ENCODE measurements at regions of chrX and their contacts with region 1.

Region 1: DNA sequence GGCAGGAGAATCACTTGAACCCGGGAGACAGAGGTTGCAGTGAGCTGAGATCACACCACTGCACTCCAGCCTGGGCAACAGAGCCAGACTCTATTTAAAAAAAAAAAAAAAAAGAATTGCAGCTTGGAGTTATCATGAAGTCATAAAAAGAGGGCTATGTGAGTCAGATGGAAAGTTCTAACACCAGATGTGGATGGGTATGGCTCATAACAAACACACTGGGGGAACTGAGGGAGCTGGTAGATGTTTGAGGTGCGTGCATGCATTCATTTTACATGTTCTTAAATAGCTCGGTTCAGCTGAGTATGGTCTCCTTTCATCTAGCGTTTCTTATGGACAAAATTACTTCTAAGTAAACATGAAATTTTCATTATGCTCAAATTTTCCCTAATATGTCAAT is 11.7 kb downstream of the TRMT2B start:
- DNase-seq: no peak
- ATAC-seq: no peak
- H3K4me3 ChIP-seq: no peak overlapping the region
- H3K4me3 Mint-ChIP-seq: no peak overlapping the region
- H3K27ac ChIP-seq: no peak overlapping the region
- H3K27ac Mint-ChIP-seq: no peak overlapping the region
- H3K4me1 ChIP-seq: no peaks in the 10 kb centered on the region
- H3K4me1 Mint-ChIP-seq: peaks cover 0 to 15% (median 2%) of the 10 kb centered on the region in 3 donors
- H3K27me3 ChIP-seq: no peaks in the 10 kb centered on the region
- H3K27me3 Mint-ChIP-seq: no peaks in the 10 kb centered on the region

Region 2: DNA sequence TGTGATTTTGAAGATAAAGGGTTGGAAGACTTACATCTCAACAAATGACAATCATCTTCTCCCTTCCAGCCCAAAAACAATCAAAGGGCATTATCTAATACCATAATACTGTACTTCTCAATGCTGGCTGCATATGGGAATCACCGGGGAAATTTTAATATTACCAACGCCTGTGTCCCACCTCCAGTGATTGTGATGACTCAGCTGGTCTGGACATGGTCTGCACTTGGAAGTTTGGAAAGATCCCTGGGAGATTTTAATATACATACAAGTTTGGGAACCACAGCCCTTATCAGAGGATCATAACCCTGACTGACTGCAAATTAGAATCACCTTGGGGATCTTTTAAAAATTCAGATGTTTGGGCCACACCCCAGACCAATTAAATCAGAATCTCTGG is 40.7 kb before region 1 on chrX:
- CTCF ChIA-PET with region 1: no interaction called
- POLR2A ChIA-PET with region 1: interaction called in 1 of 2 experiments, 10 read pairs
- DNase-seq: no peak
- ATAC-seq: no peak
- H3K4me3 ChIP-seq: no peak overlapping the region
- H3K4me3 Mint-ChIP-seq: no peak overlapping the region
- H3K27ac ChIP-seq: no peak overlapping the region
- H3K27ac Mint-ChIP-seq: no peak overlapping the region
- H3K4me1 ChIP-seq: no peaks in the 10 kb centered on the region
- H3K4me1 Mint-ChIP-seq: peaks cover 0 to under 1% (median 0%) of the 10 kb centered on the region in 3 donors
- H3K27me3 ChIP-seq: no peaks in the 10 kb centered on the region
- H3K27me3 Mint-ChIP-seq: no peaks in the 10 kb centered on the region

Region 3: DNA sequence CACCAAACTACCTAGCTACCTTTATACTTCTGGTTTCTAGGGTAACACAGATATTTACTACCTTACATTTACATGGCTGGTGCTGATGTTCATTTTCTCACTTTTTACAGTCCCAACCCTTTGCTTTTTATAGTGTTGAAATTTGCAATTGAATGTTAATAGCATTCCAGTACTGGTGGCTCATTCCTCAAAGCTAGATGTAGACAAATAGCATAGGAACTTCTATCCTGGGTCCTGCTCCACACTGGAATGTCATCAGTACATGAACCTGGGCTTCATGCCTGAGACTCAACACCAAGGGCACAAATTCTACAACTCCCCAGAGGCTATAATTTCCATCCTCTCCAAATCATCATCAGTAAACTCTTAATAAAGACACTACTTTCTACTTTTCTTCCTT is 22.0 kb after region 1 on chrX:
- CTCF ChIA-PET with region 1: no interaction called
- POLR2A ChIA-PET with region 1: interaction called in 1 of 2 experiments, 10 read pairs
- DNase-seq: no peak
- ATAC-seq: no peak
- H3K4me3 ChIP-seq: no peak overlapping the region
- H3K4me3 Mint-ChIP-seq: no peak overlapping the region
- H3K27ac ChIP-seq: no peak overlapping the region
- H3K27ac Mint-ChIP-seq: no peak overlapping the region
- H3K4me1 ChIP-seq: no peaks in the 10 kb centered on the region
- H3K4me1 Mint-ChIP-seq: peaks cover 0 to 1% (median 0%) of the 10 kb centered on the region in 3 donors
- H3K27me3 ChIP-seq: no peaks in the 10 kb centered on the region
- H3K27me3 Mint-ChIP-seq: peaks cover 0 to 13% of the 10 kb centered on the region in 2 donors

Measured in T-cell (primary cell).